Activated CD4-positive, alpha-beta T cell treated with anti-CD3 and anti-CD28 coated beads, Interleukin-2, amount 10 ng/mL, durations not matched to agents 7 days and 5 days (primary cell): ENCODE measurements at regions of chr14 and their contacts with region 1.

Region 1: GRCh38 chr14:96817750-96818666 is 20.8 kb downstream of the VRK1 start:
- DNase-seq: no peak
- H3K4me3 Mint-ChIP-seq: no peak overlapping the region
- H3K27ac Mint-ChIP-seq: no peak overlapping the region
- H3K4me1 Mint-ChIP-seq: peaks cover 17% of the 10 kb centered on the region
- H3K27me3 Mint-ChIP-seq: no peaks in the 10 kb centered on the region

Region 2: GRCh38 chr14:96806826-96807225 is 11.2 kb before region 1 on chr14:
- CTCF ChIA-PET with region 1: no interaction called
- POLR2A ChIA-PET with region 1: no interaction called
- DNase-seq: no peak
- H3K4me3 Mint-ChIP-seq: no peak overlapping the region
- H3K27ac Mint-ChIP-seq: no peak overlapping the region
- H3K4me1 Mint-ChIP-seq: peaks cover 56% of the 10 kb centered on the region
- H3K27me3 Mint-ChIP-seq: no peaks in the 10 kb centered on the region

Region 3: GRCh38 chr14:96832351-96832750 is 14.3 kb after region 1 on chr14:
- CTCF ChIA-PET with region 1: no interaction called
- POLR2A ChIA-PET with region 1: no interaction called
- DNase-seq: no peak
- H3K4me3 Mint-ChIP-seq: no peak overlapping the region
- H3K27ac Mint-ChIP-seq: no peak overlapping the region
- H3K4me1 Mint-ChIP-seq: peaks cover 10% of the 10 kb centered on the region
- H3K27me3 Mint-ChIP-seq: no peaks in the 10 kb centered on the region

Region 4: DNA sequence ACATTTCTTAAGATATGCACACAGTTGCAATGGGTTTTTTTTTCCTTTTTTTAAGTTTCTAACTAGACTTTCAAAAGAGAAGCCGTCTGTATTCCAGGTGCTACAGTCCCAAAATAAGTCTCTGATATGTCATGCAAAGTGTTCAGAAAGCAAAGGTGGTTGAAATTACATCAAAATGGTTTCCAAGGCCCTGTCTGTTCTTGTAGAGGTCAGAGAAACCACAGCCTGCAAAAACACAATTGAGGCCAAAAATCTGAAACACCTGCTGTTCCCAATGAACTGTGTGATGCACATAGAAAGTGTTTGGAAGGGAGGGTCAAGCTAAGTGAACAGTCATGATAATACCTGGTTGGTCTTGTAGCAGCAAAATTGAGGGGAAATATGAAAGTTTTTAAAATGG is 70.2 kb after region 1 on chr14:
- CTCF ChIA-PET with region 1: no interaction called
- POLR2A ChIA-PET with region 1: no interaction called
- DNase-seq: no peak
- H3K4me3 Mint-ChIP-seq: no peak overlapping the region
- H3K27ac Mint-ChIP-seq: no peak overlapping the region
- H3K4me1 Mint-ChIP-seq: peaks cover 1% of the 10 kb centered on the region
- H3K27me3 Mint-ChIP-seq: no peaks in the 10 kb centered on the region

Region 5: GRCh38 chr14:97046967-97047366 is 229.0 kb after region 1 on chr14:
- CTCF ChIA-PET with region 1: no interaction called
- POLR2A ChIA-PET with region 1: no interaction called
- DNase-seq: no peak
- H3K4me3 Mint-ChIP-seq: no peak overlapping the region
- H3K27ac Mint-ChIP-seq: no peak overlapping the region
- H3K4me1 Mint-ChIP-seq: no peaks in the 10 kb centered on the region
- H3K27me3 Mint-ChIP-seq: no peaks in the 10 kb centered on the region

Region 6: DNA sequence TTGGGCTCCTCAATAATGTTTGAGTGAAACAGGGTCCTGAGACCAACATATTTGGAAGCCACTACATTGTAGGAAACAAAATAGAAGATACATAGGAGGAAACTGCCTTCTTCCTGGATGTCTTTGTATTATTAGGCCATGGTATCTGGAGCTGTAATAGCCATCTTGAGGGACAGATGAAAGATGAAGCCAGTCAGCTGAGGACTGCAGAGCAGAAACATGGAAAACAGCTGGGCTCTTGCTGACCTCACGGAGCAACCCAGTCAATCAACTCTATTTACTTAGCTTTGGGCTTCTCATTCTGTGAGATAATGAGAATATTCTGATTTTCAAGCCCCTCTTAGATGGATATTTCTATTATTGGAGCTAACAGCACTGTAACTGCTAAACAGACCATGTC is 1491.6 kb after region 1 on chr14:
- CTCF ChIA-PET with region 1: no interaction called
- POLR2A ChIA-PET with region 1: interaction called, 10 read pairs
- DNase-seq: no peak
- H3K4me3 Mint-ChIP-seq: no peak overlapping the region
- H3K27ac Mint-ChIP-seq: no peak overlapping the region
- H3K4me1 Mint-ChIP-seq: no peaks in the 10 kb centered on the region
- H3K27me3 Mint-ChIP-seq: no peaks in the 10 kb centered on the region